Naive thymus-derived CD8-positive, alpha-beta T cell (primary cell): ENCODE measurements at regions of chr19 and their contacts with region 1.

Region 1: GRCh38 chr19:12890787-12891552 is at the start of gene GCDH:
- DNase-seq: peak; percentile 81 to 98 (median 96)
- ATAC-seq: peak; percentile 90 to 91
- H3K4me3 Mint-ChIP-seq: peak within 1 kb of the TSS; percentile 95 to 100 (median 99)
- H3K27ac Mint-ChIP-seq: peak within 1 kb of the TSS; percentile 91 to 100 (median 98)
- H3K4me1 Mint-ChIP-seq: peaks cover 13 to 39% (median 27%) of the 10 kb centered on the region in 4 donors
- H3K27me3 Mint-ChIP-seq: no peaks in the 10 kb centered on the region
- polyA plus RNA-seq, gene GCDH: 18.0 to 20.7 (median 19.8) TPM

Region 2: GRCh38 chr19:12064590-12065538 is 826.1 kb before region 1 on chr19 and contains the start of gene ZNF844:
- POLR2A ChIA-PET with region 1: interaction called, 10 read pairs
- DNase-seq: peak; percentile 47 to 87 (median 75)
- ATAC-seq: peak; percentile 87 to 88
- H3K4me3 Mint-ChIP-seq: peak within 1 kb of the TSS; percentile 82 to 94 (median 91)
- H3K27ac Mint-ChIP-seq: peak within 1 kb of the TSS; percentile 80 to 94 (median 90)
- H3K4me1 Mint-ChIP-seq: peaks cover 3 to 16% (median 9%) of the 10 kb centered on the region in 4 donors
- H3K27me3 Mint-ChIP-seq: no peaks in the 10 kb centered on the region
- polyA plus RNA-seq, gene ZNF844: 3.6 to 4.1 (median 4.0) TPM

Region 3: GRCh38 chr19:12757544-12758274 is 133.3 kb before region 1 on chr19:
- POLR2A ChIA-PET with region 1: no interaction called
- DNase-seq: peak in 9 of 10 donors; percentile 32 to 70 (median 62)
- ATAC-seq: peak; percentile 81 to 82
- H3K4me3 Mint-ChIP-seq: peak overlapping the region in 8 of 10 donors; percentile 14 to 57 (median 34)
- H3K27ac Mint-ChIP-seq: no peak overlapping the region
- H3K4me1 Mint-ChIP-seq: peaks cover 0 to 11% (median 6%) of the 10 kb centered on the region in 4 donors
- H3K27me3 Mint-ChIP-seq: peaks cover 0 to 34% (median 17%) of the 10 kb centered on the region in 5 donors

Region 4: DNA sequence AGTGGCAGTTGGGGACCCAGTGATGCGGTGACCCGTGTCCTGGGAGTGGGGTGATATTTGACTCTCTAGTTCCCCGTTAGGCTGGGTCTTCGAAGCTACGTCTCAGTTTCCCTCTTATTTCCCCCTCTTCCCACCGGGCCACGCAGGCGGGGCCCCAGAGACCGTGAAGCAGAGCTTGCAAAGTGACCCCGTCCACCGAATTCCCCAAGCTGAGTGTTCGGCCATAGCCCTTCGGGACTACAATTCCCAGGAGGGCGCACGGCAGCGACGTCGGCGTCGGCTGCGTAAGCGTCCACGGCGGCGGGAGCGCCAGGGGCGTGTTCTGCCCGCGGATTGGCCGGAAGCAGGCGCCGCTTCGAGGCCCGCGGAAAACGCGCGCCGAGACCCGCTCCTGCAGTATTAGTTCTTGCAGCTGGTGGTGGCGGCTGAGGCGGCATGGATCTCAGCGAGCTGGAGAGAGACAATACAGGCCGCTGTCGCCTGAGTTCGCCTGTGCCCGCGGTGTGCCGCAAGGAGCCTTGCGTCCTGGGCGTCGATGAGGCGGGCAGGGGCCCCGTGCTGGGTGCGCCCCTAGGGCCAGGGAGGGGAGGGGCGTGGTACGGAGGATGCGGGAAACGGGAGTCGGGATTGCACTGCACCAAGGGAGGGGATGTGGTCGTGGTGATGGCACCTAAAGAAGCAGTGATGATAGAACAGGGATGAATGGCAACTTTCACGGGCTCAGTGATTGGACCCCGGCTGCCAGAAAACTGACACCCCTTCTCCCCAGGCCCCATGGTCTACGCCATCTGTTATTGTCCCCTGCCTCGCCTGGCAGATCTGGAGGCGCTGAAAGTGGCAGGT is 84.5 kb before region 1 on chr19 and contains the start of gene RNASEH2A:
- POLR2A ChIA-PET with region 1: no interaction called
- DNase-seq: peak; percentile 76 to 88 (median 83)
- ATAC-seq: peak; percentile 89 to 90
- H3K4me3 Mint-ChIP-seq: peak within 1 kb of the TSS; percentile 85 to 97 (median 93)
- H3K27ac Mint-ChIP-seq: peak within 1 kb of the TSS; percentile 80 to 95 (median 90)
- H3K4me1 Mint-ChIP-seq: peaks cover 13 to 22% (median 21%) of the 10 kb centered on the region in 4 donors
- H3K27me3 Mint-ChIP-seq: no peaks in the 10 kb centered on the region
- polyA plus RNA-seq, gene RNASEH2A: 16.3 to 22.6 (median 21.9) TPM

Region 5: DNA sequence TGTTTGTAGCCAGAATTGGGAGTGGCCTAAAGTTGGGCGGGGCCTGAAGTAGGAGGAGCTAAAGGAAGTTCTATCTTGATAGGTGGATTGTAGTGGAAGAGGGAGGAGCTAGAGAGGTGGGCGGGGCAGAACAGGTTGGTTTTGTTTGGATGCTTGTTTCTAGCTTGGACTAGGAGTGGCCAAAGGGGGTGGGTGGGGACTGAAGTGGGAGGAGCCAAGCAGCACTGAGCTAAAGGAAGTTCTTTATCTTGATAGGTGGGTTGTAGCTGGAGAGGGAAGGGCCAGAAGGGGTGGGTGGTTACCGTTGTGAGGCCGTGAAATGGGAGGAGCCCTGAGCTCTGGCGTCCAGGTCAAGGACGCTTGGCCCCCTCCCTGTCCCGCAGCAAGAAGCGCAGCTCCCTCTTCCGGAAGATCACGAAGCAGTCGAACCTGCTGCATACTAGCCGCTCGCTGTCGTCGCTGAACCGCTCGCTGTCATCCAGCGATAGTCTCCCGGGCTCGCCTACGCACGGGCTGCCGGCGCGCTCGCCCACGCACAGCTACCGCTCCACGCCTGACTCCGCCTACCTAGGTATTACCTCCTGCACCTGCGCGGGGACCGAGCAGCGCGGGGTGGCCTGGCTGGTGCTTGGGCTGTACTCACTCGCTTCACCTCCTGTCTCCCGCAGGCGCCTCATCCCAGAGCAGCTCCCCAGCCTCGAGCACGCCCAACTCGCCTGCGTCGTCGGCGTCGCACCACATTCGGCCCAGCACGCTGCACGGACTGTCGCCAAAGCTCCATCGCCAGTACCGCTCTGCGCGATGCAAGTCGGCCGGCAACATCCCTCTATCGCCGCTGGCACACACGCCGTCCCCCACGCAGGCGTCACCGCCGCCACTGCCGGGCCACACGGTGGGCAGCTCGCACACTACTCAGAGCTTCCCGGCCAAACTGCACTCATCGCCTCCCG is 17.8 kb before region 1 on chr19:
- POLR2A ChIA-PET with region 1: interaction called, 35 read pairs
- DNase-seq: peak in 9 of 10 donors; percentile 23 to 79 (median 58)
- ATAC-seq: peak; percentile 75 to 83
- H3K4me3 Mint-ChIP-seq: peak overlapping the region in 7 of 10 donors; percentile 22 to 64 (median 54)
- H3K27ac Mint-ChIP-seq: peak overlapping the region in 5 of 10 donors; percentile 40 to 84 (median 74)
- H3K4me1 Mint-ChIP-seq: peaks cover 2 to 8% (median 6%) of the 10 kb centered on the region in 4 donors
- H3K27me3 Mint-ChIP-seq: no peaks in the 10 kb centered on the region

Region 6: DNA sequence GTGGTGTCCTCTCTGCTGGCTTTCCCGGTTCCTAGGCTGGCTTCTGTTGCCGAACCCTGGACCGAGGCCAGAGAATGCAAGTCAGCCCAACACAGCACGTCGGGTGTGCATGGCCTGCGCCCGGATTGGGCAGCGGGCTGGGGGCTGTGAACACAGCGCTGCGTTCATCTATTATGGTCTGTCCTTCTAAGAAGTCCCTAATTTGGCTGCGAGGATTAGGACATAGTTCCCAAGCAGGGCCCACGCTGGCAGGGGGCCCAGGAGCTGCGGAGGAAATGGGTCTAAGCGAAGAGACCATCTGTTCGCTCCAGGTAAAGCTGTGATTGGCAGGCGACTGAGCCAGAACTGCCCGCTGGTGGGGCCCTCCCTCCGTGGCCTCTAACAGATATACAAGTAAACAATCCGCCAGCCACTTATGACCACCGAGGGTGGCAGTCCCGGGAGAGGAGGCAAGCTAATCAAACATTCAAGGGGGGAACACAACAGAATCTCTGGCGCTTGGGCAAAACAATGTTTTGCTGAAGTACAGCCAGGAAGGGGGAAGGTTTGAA is 22.1 kb after region 1 on chr19:
- POLR2A ChIA-PET with region 1: interaction called, 45 read pairs
- DNase-seq: no peak
- ATAC-seq: no peak
- H3K4me3 Mint-ChIP-seq: peak overlapping the region in 4 of 10 donors; percentile 10 to 82 (median 52)
- H3K27ac Mint-ChIP-seq: peak overlapping the region; percentile 93 to 99 (median 98)
- H3K4me1 Mint-ChIP-seq: peaks cover 13 to 37% (median 17%) of the 10 kb centered on the region in 4 donors
- H3K27me3 Mint-ChIP-seq: no peaks in the 10 kb centered on the region

Region 7: DNA sequence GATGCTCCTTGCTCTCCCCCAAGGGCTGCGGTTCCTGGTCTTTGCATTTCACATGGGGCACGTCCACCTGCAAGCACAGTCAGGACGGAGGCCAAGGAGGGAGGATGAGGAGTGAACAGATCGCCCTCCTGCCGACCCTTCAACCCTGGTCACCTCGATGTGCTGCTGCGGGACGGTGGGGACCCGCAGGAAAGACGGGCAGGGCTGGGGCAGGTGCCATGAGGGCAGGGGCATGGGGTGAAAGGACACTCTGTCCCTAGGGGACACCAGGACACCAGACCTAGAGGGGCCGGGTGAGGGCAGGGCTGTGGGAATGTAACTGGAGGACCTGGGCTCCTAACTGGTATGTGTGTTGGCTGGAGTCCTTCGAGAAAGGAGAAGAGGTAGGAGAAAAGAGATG is 27.3 kb after region 1 on chr19:
- POLR2A ChIA-PET with region 1: interaction called, 45 read pairs
- DNase-seq: no peak
- ATAC-seq: no peak
- H3K4me3 Mint-ChIP-seq: peak overlapping the region in 9 of 10 donors; percentile 7 to 77 (median 66)
- H3K27ac Mint-ChIP-seq: peak overlapping the region in 3 of 10 donors; percentile 24 to 96 (median 67)
- H3K4me1 Mint-ChIP-seq: peaks cover 17 to 47% (median 28%) of the 10 kb centered on the region in 4 donors
- H3K27me3 Mint-ChIP-seq: peaks cover 0 to 2% (median 0%) of the 10 kb centered on the region in 5 donors

Region 8: DNA sequence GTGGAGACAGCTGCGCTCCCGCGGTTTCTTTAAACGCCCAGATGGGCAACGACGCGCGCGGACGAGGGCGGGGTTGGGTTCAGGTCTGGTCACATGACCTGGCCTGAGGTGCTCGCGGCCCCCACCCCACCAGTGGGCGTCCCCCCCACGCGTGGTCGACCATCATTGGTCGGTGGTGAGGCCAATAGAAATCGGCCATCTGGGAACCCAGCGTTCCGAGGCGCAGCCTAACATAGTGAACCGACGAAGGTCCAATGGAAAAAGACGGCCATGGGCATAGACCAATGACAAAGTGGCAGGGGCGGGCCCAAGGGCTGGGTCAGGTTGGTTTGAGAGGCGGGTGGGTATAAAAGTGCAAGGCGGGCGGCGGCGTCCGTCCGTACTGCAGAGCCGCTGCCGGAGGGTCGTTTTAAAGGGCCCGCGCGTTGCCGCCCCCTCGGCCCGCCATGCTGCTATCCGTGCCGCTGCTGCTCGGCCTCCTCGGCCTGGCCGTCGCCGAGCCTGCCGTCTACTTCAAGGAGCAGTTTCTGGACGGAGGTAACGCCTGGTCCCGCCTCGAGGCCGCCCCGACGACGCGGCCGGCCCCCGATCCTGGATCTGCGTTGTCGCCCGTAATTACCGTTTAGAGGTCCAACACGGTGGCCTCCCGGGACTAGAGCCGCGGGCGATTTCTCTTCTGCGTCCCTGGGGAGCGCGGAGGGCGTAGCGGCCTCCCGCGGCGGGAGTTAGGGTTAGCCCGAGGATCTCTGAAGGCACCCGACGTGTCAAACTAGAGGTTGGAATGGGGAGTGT is 47.5 kb after region 1 on chr19 and contains the start of gene CALR:
- POLR2A ChIA-PET with region 1: interaction called, 56 read pairs
- DNase-seq: peak; percentile 95 to 100 (median 100)
- ATAC-seq: peak; percentile 88 to 91
- H3K4me3 Mint-ChIP-seq: peak within 1 kb of the TSS; percentile 97 to 100 (median 98)
- H3K27ac Mint-ChIP-seq: peak within 1 kb of the TSS; percentile 94 to 99 (median 96)
- H3K4me1 Mint-ChIP-seq: peaks cover 25 to 70% (median 61%) of the 10 kb centered on the region in 4 donors
- H3K27me3 Mint-ChIP-seq: no peaks in the 10 kb centered on the region
- polyA plus RNA-seq, gene CALR: 135 to 190 (median 165) TPM

Region 9: GRCh38 chr19:12956446-12957388 is 65.7 kb after region 1 on chr19 and contains the start of gene GADD45GIP1:
- POLR2A ChIA-PET with region 1: interaction called, 11 read pairs
- DNase-seq: peak; percentile 68 to 87 (median 78)
- ATAC-seq: peak; percentile 93 to 98
- H3K4me3 Mint-ChIP-seq: peak within 1 kb of the TSS; percentile 75 to 93 (median 86)
- H3K27ac Mint-ChIP-seq: peak within 1 kb of the TSS; percentile 61 to 95 (median 91)
- H3K4me1 Mint-ChIP-seq: peaks cover 15 to 29% (median 25%) of the 10 kb centered on the region in 4 donors
- H3K27me3 Mint-ChIP-seq: no peaks in the 10 kb centered on the region
- polyA plus RNA-seq, gene GADD45GIP1: 59.4 to 65.1 (median 64.7) TPM